KBM-7 (cell line): ENCODE measurements at regions of chr12 and their contacts with region 1.

Region 1: GRCh38 chr12:54398995-54399793 is 14.7 kb upstream of the ZNF385A start:
- DNase-seq: peak; percentile 95

Region 2: DNA sequence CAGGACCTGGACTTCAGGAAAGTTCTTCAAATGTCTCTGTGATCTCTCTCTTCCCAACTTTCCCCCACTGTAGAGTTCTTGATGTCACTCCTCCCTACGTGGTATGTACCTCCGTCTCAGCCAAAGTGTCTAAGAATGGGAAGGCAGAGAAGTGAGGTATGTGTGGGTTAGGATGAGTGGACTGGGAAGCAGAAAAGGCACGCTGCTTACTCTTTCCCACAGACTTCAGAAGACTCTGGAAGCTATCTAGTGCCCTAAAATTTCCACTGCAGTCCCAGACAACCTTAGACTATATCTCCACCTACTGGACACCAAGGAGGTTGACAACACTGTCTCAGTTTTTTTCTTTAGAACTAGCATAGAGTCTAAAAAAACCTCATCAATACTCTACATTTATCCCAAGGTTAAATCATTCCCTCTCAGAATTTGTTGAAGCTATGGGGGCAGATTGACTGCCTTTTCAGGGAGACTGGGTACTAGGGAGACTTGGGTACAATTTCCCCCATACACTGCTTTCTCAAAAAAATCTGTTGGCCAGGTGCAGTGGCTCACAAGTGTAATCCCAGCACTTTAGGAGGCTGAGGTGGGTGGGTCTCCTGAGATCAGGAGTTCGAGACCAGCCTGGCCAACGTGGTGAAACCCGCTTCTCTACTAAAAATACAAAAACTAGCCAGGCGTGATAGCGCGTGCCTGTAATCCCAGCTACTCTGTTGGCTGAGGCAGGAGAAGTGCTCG is 40.5 kb after region 1 on chr12:
- in situ Hi-C with region 1: loop called (anchors 10 kb)
- DNase-seq: peak; percentile 77